Transverse colon (tissue), 4 donors: ENCODE measurements at regions of chr13 and their contacts with region 1.

Region 1: DNA sequence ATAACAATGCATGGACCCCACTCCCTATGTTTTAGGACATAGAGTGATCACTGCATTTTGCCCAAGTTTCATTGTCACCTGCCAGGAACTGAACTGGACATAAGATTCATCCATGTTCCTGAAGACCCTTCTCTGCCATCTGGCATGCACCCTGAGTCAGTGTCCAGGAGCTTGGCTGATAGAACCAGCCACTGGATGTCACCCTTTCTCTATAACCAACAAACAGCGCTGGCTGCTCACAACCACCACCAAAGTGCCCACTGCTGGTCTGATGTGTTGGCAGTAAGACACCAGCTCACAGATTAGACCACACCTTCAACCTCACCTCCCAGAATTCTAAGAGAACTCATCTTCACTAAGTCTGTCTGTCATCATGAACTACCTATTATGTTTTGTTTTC is 333.4 kb downstream of the ITGBL1 start:
- DNase-seq: no peak
- H3K4me3 ChIP-seq: no peak overlapping the region
- H3K27ac ChIP-seq: no peak overlapping the region
- H3K4me1 ChIP-seq: no peaks in the 10 kb centered on the region
- H3K27me3 ChIP-seq: no peaks in the 10 kb centered on the region
- CTCF ChIP-seq: no peak
- EP300 ChIP-seq: no peak
- POLR2A ChIP-seq: no peak

Region 2: GRCh38 chr13:101746513-101746912 is 39.3 kb before region 1 on chr13:
- in situ Hi-C with region 1: no loop called
- intact Hi-C with region 1: loop called (anchors 1 kb)
- DNase-seq: no peak
- H3K4me3 ChIP-seq: no peak overlapping the region
- H3K27ac ChIP-seq: no peak overlapping the region
- H3K4me1 ChIP-seq: no peaks in the 10 kb centered on the region
- H3K27me3 ChIP-seq: no peaks in the 10 kb centered on the region
- CTCF ChIP-seq: no peak
- EP300 ChIP-seq: no peak
- POLR2A ChIP-seq: no peak